ENCODE measurements at regions of chr22 and their contacts with region 1.

Region 1: GRCh38 chr22:37608477-37609239 is at the start of gene GGA1:
- DNase-seq: peak; percentile 97
- H3K4me3 ChIP-seq: peak within 1 kb of the TSS; percentile 84 to 98 (median 98)
- H3K27ac ChIP-seq: peak within 1 kb of the TSS; percentile 99
- H3K4me1 ChIP-seq: peaks cover 19% of the 10 kb centered on the region
- H3K27me3 ChIP-seq: no peaks in the 10 kb centered on the region
- CTCF ChIP-seq: no peak
- total RNA-seq, gene GGA1: 33.8 to 60.2 TPM

Region 2: GRCh38 chr22:37676736-37677492 is 68.3 kb after region 1 on chr22:
- CTCF ChIA-PET with region 1: no interaction called
- dilution Hi-C with region 1: no loop called
- in situ Hi-C with region 1: no loop called
- intact Hi-C with region 1: loop called (anchors 1 kb)
- DNase-seq: peak; percentile 96
- H3K4me3 ChIP-seq: peak overlapping the region; percentile 67 to 76 (median 72)
- H3K27ac ChIP-seq: peak overlapping the region; percentile 78
- H3K4me1 ChIP-seq: peaks cover 33% of the 10 kb centered on the region
- H3K27me3 ChIP-seq: no peaks in the 10 kb centered on the region
- CTCF ChIP-seq: no peak

Region 3: GRCh38 chr22:37777122-37777687 is 168.5 kb after region 1 on chr22:
- CTCF ChIA-PET with region 1: interaction called, 18 read pairs
- dilution Hi-C with region 1: no loop called
- in situ Hi-C with region 1: no loop called
- intact Hi-C with region 1: no loop called
- DNase-seq: peak; percentile 99
- H3K4me3 ChIP-seq: no peak overlapping the region
- H3K27ac ChIP-seq: peak overlapping the region; percentile 99
- H3K4me1 ChIP-seq: peaks cover 40% of the 10 kb centered on the region
- H3K27me3 ChIP-seq: no peaks in the 10 kb centered on the region
- CTCF ChIP-seq: no peak

Region 4: GRCh38 chr22:37862570-37863325 is 254.1 kb after region 1 on chr22:
- CTCF ChIA-PET with region 1: no interaction called
- dilution Hi-C with region 1: no loop called
- in situ Hi-C with region 1: no loop called
- intact Hi-C with region 1: loop called (anchors 10 kb)
- DNase-seq: no peak
- H3K4me3 ChIP-seq: no peak overlapping the region
- H3K27ac ChIP-seq: no peak overlapping the region
- H3K4me1 ChIP-seq: no peaks in the 10 kb centered on the region
- H3K27me3 ChIP-seq: no peaks in the 10 kb centered on the region
- CTCF ChIP-seq: no peak

Region 5: DNA sequence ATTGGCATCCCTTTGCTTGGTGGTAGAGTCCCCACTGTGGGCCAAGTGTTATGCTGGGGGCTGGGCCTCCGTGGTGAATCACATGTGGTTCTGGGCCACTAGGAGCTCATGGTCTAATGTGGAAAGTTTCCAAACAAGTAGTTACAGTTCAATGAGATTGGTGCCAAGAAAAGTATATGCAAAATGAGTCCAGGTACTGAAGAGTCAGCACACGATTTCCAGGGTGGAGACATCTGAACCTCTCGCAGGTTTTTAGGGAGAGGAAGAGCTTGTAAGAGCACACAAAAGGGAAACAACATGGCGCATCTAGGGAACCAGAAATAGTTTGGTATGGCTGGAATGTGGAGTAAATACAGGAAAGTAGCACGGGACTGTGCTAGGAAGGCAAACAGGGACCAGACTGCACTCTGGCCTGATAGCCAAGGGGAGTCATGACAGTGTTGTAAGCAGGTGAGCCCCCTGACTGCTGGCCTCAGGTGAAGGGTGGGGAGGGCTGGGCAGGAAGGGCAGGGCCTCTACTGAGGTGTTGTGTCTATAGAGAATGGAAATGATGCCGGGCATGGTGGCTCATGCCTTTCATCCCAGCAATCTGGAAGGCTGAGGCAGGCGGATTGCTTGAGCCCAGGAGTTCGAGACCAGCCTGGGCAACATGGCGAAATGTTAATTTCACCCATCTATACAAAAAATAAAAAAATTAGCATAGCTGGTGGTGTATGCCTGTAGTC is 357.4 kb after region 1 on chr22:
- CTCF ChIA-PET with region 1: no interaction called
- dilution Hi-C with region 1: no loop called
- in situ Hi-C with region 1: no loop called
- intact Hi-C with region 1: loop called (anchors 5 kb)
- DNase-seq: peak; percentile 17
- H3K4me3 ChIP-seq: no peak overlapping the region
- H3K27ac ChIP-seq: no peak overlapping the region
- H3K4me1 ChIP-seq: peaks cover 11% of the 10 kb centered on the region
- H3K27me3 ChIP-seq: no peaks in the 10 kb centered on the region
- CTCF ChIP-seq: no peak